Endothelial cell of umbilical vein (primary cell): ENCODE measurements at regions of chr1 and their contacts with region 1.

Region 1: GRCh38 chr1:15820478-15820877 is 13.0 kb upstream of the UQCRHL start:
- DNase-seq: no peak
- H3K4me3 ChIP-seq: no peak overlapping the region
- H3K27ac ChIP-seq: no peak overlapping the region
- H3K4me1 ChIP-seq: no peaks in the 10 kb centered on the region
- H3K27me3 ChIP-seq: no peaks in the 10 kb centered on the region
- CTCF ChIP-seq: no peak
- POLR2A ChIP-seq: no peak

Region 2: GRCh38 chr1:15797614-15798390 is 22.7 kb before region 1 on chr1:
- CTCF ChIA-PET with region 1: interaction called, 75 read pairs
- POLR2A ChIA-PET with region 1: no interaction called
- dilution Hi-C with region 1: no loop called
- intact Hi-C with region 1: no loop called
- DNase-seq: peak; percentile 30
- H3K4me3 ChIP-seq: no peak overlapping the region
- H3K27ac ChIP-seq: peak overlapping the region; percentile 88
- H3K4me1 ChIP-seq: peaks cover 56% of the 10 kb centered on the region
- H3K27me3 ChIP-seq: no peaks in the 10 kb centered on the region
- CTCF ChIP-seq: no peak
- POLR2A ChIP-seq: no peak

Region 3: DNA sequence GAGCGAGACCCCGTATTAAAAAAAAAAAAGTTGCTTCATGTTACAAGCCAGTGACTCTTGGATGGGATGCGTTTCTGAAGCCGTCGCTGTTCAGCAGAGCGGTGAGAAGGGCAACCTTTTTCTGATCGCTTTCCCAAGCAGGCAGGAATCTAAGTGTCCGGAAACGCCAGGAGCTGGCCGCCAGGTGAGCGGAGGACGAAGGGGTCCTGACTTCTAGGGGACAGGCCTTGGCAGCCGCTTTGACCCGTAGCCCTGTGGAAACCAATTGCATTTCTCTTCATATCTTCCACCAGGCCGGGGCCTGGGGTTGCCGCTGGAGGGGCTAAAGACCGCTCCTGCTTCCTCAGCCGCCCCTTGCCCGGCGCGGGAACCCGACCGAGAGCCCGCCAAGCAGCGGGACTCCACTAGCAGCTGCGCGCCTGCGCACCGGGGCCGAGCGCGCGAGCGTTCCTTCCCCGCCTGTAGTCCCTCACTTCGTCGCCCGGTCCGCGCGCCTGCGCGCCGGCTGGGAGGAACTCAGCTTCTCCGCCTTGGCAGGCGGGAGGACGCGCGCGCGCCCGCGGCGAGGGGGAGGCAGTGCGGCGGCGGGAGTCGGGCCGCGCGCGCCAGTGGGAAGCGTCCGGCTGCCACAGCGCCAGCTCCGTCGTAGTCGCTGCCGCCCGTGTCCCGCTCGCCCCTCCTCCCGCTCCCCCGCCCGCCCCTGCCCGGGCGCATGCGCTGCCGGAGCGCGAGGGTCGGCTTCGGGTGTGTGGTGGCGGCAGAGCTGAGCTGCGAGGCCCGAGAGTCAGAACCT is 26.8 kb after region 1 on chr1 and contains the start of gene SPEN:
- CTCF ChIA-PET with region 1: interaction called, 22 read pairs
- POLR2A ChIA-PET with region 1: no interaction called
- dilution Hi-C with region 1: no loop called
- intact Hi-C with region 1: loop called (anchors 1 kb)
- DNase-seq: peak; percentile 97
- H3K4me3 ChIP-seq: peak within 1 kb of the TSS; percentile 71 to 100 (median 99)
- H3K27ac ChIP-seq: peak within 1 kb of the TSS; percentile 62
- H3K4me1 ChIP-seq: peaks cover 25% of the 10 kb centered on the region
- H3K27me3 ChIP-seq: no peaks in the 10 kb centered on the region
- CTCF ChIP-seq: no peak
- POLR2A ChIP-seq: peak; percentile 54
- total RNA-seq, gene SPEN: 40.3 and 44.4 TPM in 2 replicates

Region 4: GRCh38 chr1:15908597-15908996 is 88.1 kb after region 1 on chr1:
- CTCF ChIA-PET with region 1: interaction called, 17 read pairs
- POLR2A ChIA-PET with region 1: interaction called, 3 read pairs
- dilution Hi-C with region 1: no loop called
- intact Hi-C with region 1: loop called (anchors 5 kb)
- DNase-seq: no peak
- H3K4me3 ChIP-seq: no peak overlapping the region
- H3K27ac ChIP-seq: no peak overlapping the region
- H3K4me1 ChIP-seq: no peaks in the 10 kb centered on the region
- H3K27me3 ChIP-seq: no peaks in the 10 kb centered on the region
- CTCF ChIP-seq: no peak
- POLR2A ChIP-seq: no peak

Region 5: DNA sequence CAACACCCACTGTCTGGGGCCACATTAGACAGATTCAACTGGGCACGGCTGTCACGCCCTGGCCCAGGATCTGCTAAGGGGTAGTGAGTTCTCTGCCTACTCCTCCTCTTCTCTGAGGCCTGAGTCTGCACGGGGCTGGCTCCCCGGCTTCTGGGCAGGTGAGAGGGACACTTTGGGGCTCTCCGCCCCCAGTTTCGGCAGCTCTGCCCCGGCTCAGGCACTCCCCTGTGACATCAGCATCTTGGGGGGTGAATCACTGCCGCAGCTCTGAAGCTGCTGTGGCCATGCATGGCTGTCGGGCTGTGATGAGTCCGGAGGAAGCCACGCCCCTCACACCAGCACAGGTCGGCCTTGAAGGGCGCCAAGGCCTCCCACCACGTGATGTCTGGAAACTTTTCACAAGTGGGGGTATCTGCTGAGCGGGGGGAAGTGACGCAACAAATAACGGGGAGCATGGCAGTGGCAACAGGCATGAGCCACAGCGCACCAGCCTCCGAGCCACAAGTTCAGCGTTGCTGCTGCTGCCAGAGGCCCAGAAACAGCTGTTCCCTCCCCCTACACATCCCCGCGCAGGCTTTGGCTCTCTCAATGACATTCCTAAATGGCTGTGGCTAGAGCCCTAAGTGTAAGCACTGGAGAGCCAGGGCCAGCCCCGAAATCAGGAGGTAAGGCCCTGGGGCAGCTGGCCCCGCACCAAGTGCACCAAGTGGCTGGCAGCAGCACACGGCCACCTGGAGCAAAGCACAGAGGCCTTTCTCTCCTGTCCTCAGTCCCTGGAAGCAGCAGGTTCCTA is 129.2 kb after region 1 on chr1:
- CTCF ChIA-PET with region 1: interaction called, 11 read pairs
- POLR2A ChIA-PET with region 1: no interaction called
- dilution Hi-C with region 1: no loop called
- intact Hi-C with region 1: no loop called
- DNase-seq: peak; percentile 92
- H3K4me3 ChIP-seq: no peak overlapping the region
- H3K27ac ChIP-seq: peak overlapping the region; percentile 75
- H3K4me1 ChIP-seq: peaks cover 60% of the 10 kb centered on the region
- H3K27me3 ChIP-seq: no peaks in the 10 kb centered on the region
- CTCF ChIP-seq: no peak
- POLR2A ChIP-seq: no peak

Region 6: DNA sequence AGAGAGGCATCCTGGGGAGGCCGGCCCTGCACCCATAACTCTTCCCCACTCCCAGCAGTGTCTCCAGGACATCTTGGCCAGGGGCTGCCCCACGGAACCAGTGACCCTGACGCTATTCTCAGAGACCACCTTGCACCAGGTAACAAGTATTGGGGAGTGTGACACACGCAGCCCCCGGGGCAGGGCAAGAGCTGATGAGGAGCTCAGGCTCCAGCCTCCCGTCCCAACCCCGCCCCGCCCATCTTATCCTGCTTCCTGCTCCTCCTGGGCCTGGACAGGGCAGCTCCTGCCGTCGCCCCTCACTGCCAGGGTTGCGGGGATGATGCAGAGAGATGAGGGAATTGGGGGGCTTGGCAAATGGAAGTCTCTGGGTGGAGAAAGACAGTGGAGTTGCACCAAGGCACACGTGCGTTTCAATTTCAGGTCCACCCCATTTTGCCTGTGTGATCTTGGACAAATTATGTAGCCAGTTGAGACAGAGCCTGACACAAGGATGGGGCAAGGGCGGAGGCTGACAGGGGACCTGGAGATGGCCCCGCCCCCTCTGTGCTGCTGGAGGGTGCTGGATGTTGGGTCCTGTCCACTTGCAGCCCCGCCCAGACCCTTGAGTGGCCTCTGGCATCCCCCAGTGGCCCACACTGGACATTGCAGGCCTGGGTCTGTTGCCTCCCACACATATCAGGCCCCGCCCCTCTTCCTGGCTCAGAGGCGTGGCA is 212.1 kb after region 1 on chr1:
- CTCF ChIA-PET with region 1: interaction called, 4 read pairs
- POLR2A ChIA-PET with region 1: no interaction called
- dilution Hi-C with region 1: no loop called
- intact Hi-C with region 1: loop called (anchors 1 kb)
- DNase-seq: peak; percentile 88
- H3K4me3 ChIP-seq: no peak overlapping the region
- H3K27ac ChIP-seq: no peak overlapping the region
- H3K4me1 ChIP-seq: no peaks in the 10 kb centered on the region
- H3K27me3 ChIP-seq: no peaks in the 10 kb centered on the region
- CTCF ChIP-seq: peak; percentile 86 to 94
- POLR2A ChIP-seq: no peak